GM10248 (cell line): ENCODE measurements at regions of chr11 and their contacts with region 1.

Region 1: GRCh38 chr11:62081378-62082291 is 42.2 kb upstream of the INCENP start:
- DNase-seq: peak; percentile 77
- CTCF ChIP-seq: peak; percentile 83

Region 2: GRCh38 chr11:61602775-61603569 is 478.7 kb before region 1 on chr11:
- CTCF ChIA-PET with region 1: no interaction called
- POLR2A ChIA-PET with region 1: no interaction called
- DNase-seq: no peak
- CTCF ChIP-seq: no peak

Region 3: DNA sequence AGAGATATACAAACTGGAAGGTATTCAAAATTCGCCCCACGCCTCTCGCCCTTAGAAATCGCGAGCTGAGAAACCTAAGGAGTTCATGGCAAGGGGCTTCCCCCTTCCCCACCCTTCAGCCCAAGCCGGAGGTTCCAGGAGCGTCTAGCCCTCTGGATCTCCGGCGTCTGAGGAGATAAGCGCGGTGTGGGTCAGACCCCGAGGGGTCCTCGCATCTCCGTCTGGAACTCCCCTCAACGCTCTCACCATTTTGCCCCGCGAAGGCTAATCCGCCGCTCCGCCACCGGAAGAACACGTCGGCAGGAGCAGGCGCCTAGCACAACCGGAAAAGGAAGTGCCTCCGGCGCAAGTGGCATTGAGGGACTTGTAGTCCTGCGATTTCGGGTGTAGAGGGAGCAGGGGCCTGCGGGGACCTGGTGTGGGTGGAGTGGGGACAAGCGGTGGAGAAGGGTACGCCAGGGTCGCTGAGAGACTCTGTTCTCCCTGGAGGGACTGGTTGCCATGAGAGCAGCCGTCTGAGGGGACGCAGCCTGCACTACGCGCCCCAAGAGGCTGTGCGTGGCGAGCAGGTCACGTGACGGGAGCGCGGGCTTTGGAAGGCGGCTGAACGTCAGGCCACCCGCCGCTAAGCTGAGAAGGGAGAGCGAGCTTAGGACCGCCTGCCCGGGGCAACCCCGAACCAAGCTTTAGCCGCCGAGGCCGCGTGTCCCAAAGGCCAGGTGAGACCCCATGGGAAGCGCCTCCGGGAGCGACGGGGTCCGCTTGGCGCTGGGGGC is 289.1 kb before region 1 on chr11 and contains the starts of genes FEN1 and TMEM258:
- CTCF ChIA-PET with region 1: interaction called, 119 read pairs
- POLR2A ChIA-PET with region 1: no interaction called
- DNase-seq: peak; percentile 93
- CTCF ChIP-seq: no peak

Region 4: DNA sequence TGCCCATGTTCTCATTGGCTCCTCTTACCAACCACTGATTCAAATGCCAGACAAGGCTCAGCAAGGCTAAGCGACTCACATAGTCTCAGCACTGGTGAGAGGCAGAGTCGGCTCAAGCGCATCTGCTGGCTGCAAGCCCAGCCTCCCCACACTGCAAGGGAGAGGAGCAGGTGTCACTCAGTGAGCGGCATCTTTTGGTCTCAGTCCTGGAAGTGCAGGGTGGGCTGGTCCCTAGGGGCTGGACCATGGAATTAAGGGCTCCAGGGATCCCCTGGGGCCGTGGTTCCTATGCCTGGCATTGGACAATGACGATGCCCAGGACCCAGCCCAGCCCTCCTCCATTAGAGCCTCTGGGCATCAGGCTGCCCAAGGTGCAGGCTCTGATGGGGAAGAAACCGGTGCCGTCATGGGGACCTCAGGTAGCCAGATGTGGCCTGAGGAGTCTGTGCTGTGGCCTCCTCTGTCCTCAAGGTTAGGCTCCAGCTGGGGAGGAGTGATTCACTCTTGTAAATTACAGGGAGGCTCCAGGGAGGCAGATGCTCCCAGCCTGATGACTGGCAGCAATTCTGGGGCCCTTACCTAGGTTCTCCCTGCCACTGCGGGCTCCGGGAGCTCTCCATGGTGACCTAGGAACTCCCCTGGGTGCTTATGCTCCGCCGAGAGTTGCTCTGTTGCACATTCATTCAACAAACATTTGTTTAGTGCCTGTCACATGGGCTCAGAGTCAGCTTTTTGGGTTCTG is 225.5 kb before region 1 on chr11:
- CTCF ChIA-PET with region 1: no interaction called
- POLR2A ChIA-PET with region 1: no interaction called
- DNase-seq: no peak
- CTCF ChIP-seq: no peak

Region 5: GRCh38 chr11:61885166-61885778 is 196.4 kb before region 1 on chr11:
- CTCF ChIA-PET with region 1: interaction called, 21 read pairs
- POLR2A ChIA-PET with region 1: no interaction called
- DNase-seq: no peak
- CTCF ChIP-seq: no peak

Region 6: DNA sequence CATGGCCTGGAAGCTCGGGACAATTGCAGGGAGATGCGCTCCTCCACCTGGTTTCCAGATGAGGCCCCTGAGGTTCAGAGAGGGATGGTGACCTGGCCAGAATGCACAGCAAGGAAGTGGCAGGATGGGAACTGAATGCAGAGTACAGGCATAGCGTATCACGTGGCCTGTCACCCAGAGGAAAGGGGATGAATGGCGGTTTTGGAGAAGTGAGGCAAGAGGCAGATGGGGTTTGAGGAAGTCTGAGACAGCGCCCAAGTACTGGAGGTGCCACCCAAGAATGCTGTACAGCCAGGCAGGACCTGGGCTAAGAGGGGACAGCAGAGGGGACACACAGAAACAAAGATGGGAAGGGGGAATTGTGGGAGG is 169.1 kb before region 1 on chr11:
- CTCF ChIA-PET with region 1: interaction called, 17 read pairs
- POLR2A ChIA-PET with region 1: no interaction called
- DNase-seq: no peak
- CTCF ChIP-seq: no peak

Region 7: GRCh38 chr11:61967116-61967923 is 114.3 kb before region 1 on chr11 and contains the start of gene FTH1:
- CTCF ChIA-PET with region 1: interaction called, 14 read pairs
- POLR2A ChIA-PET with region 1: interaction called, 5 read pairs
- DNase-seq: peak; percentile 94
- CTCF ChIP-seq: no peak

Region 8: GRCh38 chr11:62025487-62026105 is 56.0 kb before region 1 on chr11:
- CTCF ChIA-PET with region 1: interaction called, 18 read pairs
- POLR2A ChIA-PET with region 1: no interaction called
- DNase-seq: peak; percentile 65
- CTCF ChIP-seq: no peak

Region 9: GRCh38 chr11:62108017-62108750 is 26.5 kb after region 1 on chr11:
- CTCF ChIA-PET with region 1: interaction called, 55 read pairs
- POLR2A ChIA-PET with region 1: no interaction called
- DNase-seq: peak; percentile 56
- CTCF ChIP-seq: peak; percentile 76

Region 10: DNA sequence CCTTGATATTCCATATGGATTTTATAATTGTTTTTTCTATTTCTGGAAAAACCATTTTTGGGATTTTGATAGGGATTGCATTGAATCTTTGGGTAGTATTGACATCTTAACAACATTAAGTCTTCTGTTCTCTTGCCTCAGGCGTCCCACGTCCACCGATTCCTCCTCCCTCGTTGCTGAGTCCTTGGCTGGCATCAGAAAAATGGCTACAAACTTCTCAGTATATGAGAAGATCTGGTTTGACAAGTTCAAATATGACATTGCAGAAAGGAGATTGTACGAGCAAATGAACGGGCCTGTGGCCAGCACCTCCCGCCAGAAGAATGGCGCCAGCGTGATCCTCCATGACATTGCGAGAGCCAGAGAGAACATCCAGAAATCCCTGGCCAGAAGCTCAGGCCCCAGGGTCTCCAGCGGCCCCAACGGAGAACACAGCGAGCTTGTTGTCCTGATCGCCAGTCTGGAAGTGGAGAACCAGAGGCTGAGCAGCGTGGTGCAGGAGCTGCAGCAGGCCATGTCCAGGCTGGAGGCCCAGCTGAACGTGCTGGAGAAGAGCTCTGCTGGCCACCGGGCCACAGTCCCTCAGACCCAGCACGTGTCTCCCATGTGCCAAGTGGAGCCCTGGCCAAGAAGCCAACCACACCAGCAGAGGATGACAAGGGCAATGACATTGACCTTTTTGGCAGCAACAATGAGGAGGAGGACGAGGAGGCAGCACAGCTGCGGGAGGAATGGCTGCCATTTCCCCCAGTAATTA is 87.6 kb after region 1 on chr11:
- CTCF ChIA-PET with region 1: no interaction called
- POLR2A ChIA-PET with region 1: no interaction called
- DNase-seq: no peak
- CTCF ChIP-seq: no peak